ENCODE measurements at regions of chr15 and their contacts with region 1.

Region 1: DNA sequence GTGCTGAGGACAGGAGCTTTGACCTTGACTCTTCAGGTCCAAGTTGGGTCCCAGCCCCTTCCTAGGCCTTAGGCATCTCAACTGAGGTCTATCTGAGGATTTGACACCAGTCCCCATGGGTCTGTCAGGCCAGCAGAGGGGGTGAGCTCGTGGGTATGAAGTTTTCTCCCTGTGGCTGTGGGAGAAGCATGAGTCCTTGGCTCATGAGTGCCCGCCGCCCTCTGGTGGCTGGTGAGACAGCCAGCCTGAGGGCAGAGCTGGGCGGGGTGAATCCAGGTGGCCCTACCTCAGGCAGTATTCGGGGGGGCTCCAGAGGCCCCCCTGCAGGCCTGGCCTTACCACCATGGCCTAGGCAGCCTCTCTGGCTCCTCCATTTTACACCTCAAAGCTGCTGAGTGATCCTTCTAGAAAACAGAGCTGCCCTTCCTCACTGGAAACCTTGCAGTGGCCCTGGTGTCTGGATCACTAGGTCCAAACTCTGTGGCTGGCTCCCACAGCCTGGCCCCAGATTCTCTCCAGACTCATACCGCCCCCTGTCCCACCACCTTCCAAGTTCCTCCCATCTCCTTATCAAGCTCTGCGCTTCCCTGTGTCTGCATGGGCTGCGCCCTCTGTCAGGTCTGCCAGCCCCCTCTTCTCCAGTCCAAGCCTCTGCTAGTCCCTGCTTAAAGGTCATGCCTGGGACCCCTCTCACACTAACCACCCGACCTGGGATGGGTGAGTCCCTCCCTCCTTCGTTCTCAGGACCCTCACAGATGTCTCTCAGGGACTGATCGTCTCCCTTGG is 16.1 kb downstream of the SH2D7 start:
- DNase-seq: peak; percentile 85 to 95 (median 93)
- ATAC-seq: peak; percentile 88 to 89
- H3K4me3 ChIP-seq: no peak overlapping the region
- H3K27ac ChIP-seq: no peak overlapping the region
- H3K4me1 ChIP-seq: no peaks in the 10 kb centered on the region
- H3K27me3 ChIP-seq: no peaks in the 10 kb centered on the region

Region 2: DNA sequence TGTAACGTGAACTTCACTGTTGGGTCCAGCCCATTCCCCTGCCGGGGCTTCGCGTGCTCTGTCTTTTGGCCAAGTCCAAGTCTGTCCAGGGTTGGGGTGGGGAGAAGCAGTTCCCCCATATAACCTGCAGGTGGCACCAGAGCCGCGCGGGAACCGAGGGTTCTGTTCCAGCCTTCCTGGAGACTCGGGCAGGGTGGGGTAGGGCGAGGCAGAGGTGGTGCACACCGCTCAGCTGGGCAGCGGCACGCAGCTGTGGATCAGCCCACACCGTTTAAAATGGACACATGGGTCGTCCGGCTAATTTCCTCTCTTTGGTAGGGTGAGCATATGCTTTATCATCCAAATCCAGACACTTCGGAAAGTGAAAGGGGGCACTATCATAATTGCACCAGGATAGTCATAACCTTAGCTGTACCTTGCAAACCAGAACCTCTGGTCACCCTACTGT is 149.0 kb before region 1 on chr15:
- intact Hi-C with region 1: loop called (anchors 2 kb)
- DNase-seq: peak; percentile 78 to 92 (median 89)
- ATAC-seq: peak; percentile 95 to 99
- H3K4me3 ChIP-seq: no peak overlapping the region
- H3K27ac ChIP-seq: no peak overlapping the region
- H3K4me1 ChIP-seq: no peaks in the 10 kb centered on the region
- H3K27me3 ChIP-seq: no peaks in the 10 kb centered on the region

Region 3: GRCh38 chr15:78000091-78000926 is 108.2 kb before region 1 on chr15:
- intact Hi-C with region 1: loop called in 1 of 4 experiments (anchors 10 kb)
- DNase-seq: peak; percentile 73 to 91 (median 88)
- ATAC-seq: peak; percentile 61 to 79
- H3K4me3 ChIP-seq: no peak overlapping the region
- H3K27ac ChIP-seq: no peak overlapping the region
- H3K4me1 ChIP-seq: peaks cover 3% of the 10 kb centered on the region
- H3K27me3 ChIP-seq: no peaks in the 10 kb centered on the region

Region 4: DNA sequence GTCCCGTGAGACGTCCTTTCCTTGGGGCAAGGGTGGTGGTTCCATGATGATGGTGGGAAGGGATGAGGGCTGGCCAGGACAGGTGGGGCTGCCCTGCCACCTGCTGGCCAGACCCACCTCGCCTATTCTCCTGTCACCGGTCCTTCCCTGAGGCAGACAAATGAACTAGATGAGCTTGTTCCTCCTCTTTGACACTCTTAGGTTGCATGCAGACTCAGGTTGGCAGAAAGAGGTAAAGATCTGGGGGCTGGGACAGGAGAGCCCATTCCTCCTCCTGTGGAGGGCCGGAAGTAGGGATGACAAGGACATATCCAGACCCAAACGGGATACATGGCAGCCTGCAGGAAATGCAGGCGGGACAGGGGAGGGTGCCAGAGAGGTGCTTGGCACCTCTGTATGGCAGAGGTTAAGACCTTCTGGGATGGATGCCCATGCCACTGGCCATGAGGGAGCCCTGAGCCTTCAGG is 87.3 kb after region 1 on chr15:
- intact Hi-C with region 1: loop called (anchors 1 to 10 kb)
- DNase-seq: no peak
- ATAC-seq: peak; percentile 62 to 67
- H3K4me3 ChIP-seq: no peak overlapping the region
- H3K27ac ChIP-seq: no peak overlapping the region
- H3K4me1 ChIP-seq: no peaks in the 10 kb centered on the region
- H3K27me3 ChIP-seq: no peaks in the 10 kb centered on the region

Region 5: GRCh38 chr15:78241007-78241406 is 132.5 kb after region 1 on chr15:
- intact Hi-C with region 1: loop called (anchors 1 to 5 kb)
- DNase-seq: peak; percentile 84 to 95 (median 95)
- ATAC-seq: peak; percentile 91 to 92
- H3K4me3 ChIP-seq: no peak overlapping the region
- H3K27ac ChIP-seq: no peak overlapping the region
- H3K4me1 ChIP-seq: no peaks in the 10 kb centered on the region
- H3K27me3 ChIP-seq: no peaks in the 10 kb centered on the region